HCT116 (cell line): ENCODE measurements at regions of chr13 and their contacts with region 1.

Region 1: DNA sequence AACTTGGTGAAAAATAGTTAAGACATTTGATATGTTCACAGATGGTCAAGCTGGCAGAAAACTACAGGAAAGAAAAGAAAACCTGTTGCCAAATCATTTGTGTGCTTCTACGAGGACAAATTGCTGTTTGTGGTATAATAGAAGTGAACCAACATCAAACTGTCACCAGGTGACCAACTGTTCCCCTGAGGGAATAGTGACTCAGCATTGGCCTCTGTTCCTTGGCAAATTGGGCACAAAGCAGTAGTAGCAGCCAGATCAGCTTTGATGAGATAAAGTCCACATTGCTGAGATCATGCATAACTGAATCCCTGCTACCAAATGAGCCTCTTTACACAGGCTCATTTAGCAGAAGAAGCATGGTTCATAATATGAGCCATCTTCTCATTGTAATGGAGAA is 103.5 kb downstream of the POSTN start:
- DNase-seq: no peak
- ATAC-seq: no peak
- H3K4me3 ChIP-seq: no peak overlapping the region
- H3K27ac ChIP-seq: no peak overlapping the region
- H3K4me1 ChIP-seq: no peaks in the 10 kb centered on the region
- H3K27me3 ChIP-seq: no peaks in the 10 kb centered on the region
- CTCF ChIP-seq: no peak
- POLR2A ChIP-seq: no peak
- RAD21 ChIP-seq: no peak

Region 2: DNA sequence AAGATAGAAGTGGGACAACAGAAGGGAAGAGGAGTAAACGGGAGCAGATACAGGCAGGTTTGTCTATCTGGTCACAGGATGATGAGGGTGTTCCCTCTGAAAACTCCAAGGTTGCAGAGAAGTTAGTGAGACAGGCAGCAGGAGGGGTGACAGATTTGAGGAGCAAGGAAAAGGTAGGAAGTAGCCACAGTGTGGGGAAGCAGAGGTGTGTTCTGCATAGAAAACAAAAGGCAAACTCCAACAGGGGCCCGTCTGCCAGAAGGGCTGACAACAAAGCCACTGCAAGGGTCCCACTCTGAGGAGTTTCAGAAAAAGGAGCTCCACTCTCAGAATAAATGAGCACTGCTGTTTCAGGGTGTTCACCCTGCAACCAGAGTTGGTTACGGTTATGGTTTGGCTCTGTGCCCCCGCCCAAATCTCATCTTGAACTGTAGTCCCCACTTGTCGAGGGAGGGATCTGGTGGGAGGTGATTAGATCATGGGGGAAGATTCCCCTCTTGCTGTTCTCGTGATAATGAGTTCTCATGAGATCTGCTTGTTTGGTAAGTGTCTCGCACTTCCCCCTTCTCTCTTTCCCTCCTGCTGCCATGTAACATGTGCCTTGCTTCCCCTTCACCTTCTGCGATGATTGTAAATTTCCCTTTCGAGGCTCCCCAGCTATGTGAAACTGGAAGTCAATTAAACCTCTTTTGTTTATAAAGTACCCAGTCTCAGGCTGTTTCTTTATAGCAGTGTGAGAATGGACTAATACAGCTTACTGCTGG is 607.1 kb before region 1 on chr13:
- CTCF ChIA-PET with region 1: no interaction called
- POLR2A ChIA-PET with region 1: no interaction called
- RAD21 ChIA-PET with region 1: no interaction called
- intact Hi-C with region 1: no loop called
- DNase-seq: no peak
- ATAC-seq: no peak
- H3K4me3 ChIP-seq: no peak overlapping the region
- H3K27ac ChIP-seq: no peak overlapping the region
- H3K4me1 ChIP-seq: no peaks in the 10 kb centered on the region
- H3K27me3 ChIP-seq: no peaks in the 10 kb centered on the region
- CTCF ChIP-seq: no peak
- POLR2A ChIP-seq: no peak
- RAD21 ChIP-seq: no peak

Region 3: GRCh38 chr13:37270226-37271001 is 224.6 kb before region 1 on chr13:
- CTCF ChIA-PET with region 1: no interaction called
- POLR2A ChIA-PET with region 1: no interaction called
- RAD21 ChIA-PET with region 1: no interaction called
- intact Hi-C with region 1: no loop called
- DNase-seq: no peak
- ATAC-seq: no peak
- H3K4me3 ChIP-seq: no peak overlapping the region
- H3K27ac ChIP-seq: no peak overlapping the region
- H3K4me1 ChIP-seq: no peaks in the 10 kb centered on the region
- H3K27me3 ChIP-seq: no peaks in the 10 kb centered on the region
- CTCF ChIP-seq: no peak
- POLR2A ChIP-seq: no peak
- RAD21 ChIP-seq: no peak

Region 4: DNA sequence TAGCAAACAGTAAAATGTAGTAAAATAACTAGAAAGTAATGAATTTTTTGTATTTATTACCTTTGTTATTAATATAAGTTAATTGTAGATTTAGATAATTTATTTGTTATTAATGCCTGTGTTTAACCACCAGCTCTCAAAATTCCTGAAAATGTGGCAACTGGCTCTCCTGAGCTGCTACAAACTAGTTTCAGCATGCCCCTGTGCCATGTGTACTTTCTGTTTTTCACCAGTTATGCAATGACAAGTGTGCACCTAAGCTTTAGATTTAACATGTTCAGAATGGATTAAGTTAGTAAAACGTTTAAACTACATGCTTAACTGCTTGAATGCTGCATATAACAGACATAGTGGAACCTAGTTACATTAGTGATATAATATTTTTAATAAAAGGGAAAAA is 15.4 kb after region 1 on chr13:
- CTCF ChIA-PET with region 1: no interaction called
- POLR2A ChIA-PET with region 1: no interaction called
- RAD21 ChIA-PET with region 1: no interaction called
- intact Hi-C with region 1: loop called (anchors 1 kb)
- DNase-seq: no peak
- ATAC-seq: no peak
- H3K4me3 ChIP-seq: no peak overlapping the region
- H3K27ac ChIP-seq: no peak overlapping the region
- H3K4me1 ChIP-seq: no peaks in the 10 kb centered on the region
- H3K27me3 ChIP-seq: no peaks in the 10 kb centered on the region
- CTCF ChIP-seq: no peak
- POLR2A ChIP-seq: no peak
- RAD21 ChIP-seq: no peak

Region 5: DNA sequence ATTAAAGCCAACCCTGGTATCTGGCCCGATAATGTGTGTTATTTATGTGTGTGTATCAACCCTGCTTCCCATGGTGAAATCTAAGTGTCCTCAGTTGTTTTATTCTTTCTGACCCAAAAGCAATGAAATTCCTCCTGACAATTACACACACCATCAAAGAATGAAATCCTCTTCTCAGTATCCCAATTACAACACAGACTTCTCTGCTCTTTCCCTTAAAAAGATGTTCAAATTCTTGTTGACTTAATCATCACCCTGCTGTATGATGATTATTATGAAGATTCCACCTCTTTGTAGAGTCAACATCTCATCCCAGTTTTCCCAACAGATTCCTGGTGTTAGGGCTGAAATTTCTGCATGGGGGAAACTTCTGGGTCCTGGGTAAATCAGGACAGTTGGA is 383.4 kb after region 1 on chr13:
- CTCF ChIA-PET with region 1: no interaction called
- POLR2A ChIA-PET with region 1: no interaction called
- RAD21 ChIA-PET with region 1: no interaction called
- intact Hi-C with region 1: no loop called
- DNase-seq: no peak
- ATAC-seq: no peak
- H3K4me3 ChIP-seq: no peak overlapping the region
- H3K27ac ChIP-seq: no peak overlapping the region
- H3K4me1 ChIP-seq: no peaks in the 10 kb centered on the region
- H3K27me3 ChIP-seq: no peaks in the 10 kb centered on the region
- CTCF ChIP-seq: no peak
- POLR2A ChIP-seq: no peak
- RAD21 ChIP-seq: no peak